Activated CD4-positive, alpha-beta memory T cell treated with anti-CD3 and anti-CD28 coated beads for 36 hours (primary cell): ENCODE measurements at regions of chr4 and their contacts with region 1.

Region 1: GRCh38 chr4:89904524-89904923 is 9.9 kb downstream of the MMRN1 start:
- DNase-seq: no peak
- H3K4me3 Mint-ChIP-seq: no peak overlapping the region
- H3K27ac Mint-ChIP-seq: no peak overlapping the region
- H3K4me1 Mint-ChIP-seq: peaks cover 2% of the 10 kb centered on the region
- H3K27me3 Mint-ChIP-seq: no peaks in the 10 kb centered on the region

Region 2: DNA sequence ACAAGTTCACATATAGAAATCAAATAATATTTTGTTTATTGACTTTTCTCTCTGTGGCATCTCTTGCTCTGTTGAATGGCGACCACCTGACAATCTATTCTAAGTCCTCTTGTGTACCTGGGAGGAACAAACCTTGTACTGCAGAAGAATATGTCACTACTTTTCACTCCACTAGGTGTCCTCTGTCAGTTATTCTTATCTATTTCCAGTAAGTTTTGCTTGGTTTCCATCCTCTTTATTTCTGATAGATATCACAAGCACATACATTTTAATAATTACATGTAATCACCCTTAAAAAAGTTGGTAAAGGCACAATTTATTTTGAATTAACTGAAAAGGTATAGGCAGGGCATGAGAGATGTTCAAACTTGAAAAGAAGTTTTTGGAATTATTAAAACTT is 305.9 kb before region 1 on chr4:
- CTCF ChIA-PET with region 1: no interaction called
- POLR2A ChIA-PET with region 1: no interaction called
- intact Hi-C with region 1: loop called (anchors 2 kb)
- DNase-seq: no peak
- H3K4me3 Mint-ChIP-seq: no peak overlapping the region
- H3K27ac Mint-ChIP-seq: no peak overlapping the region
- H3K4me1 Mint-ChIP-seq: no peaks in the 10 kb centered on the region
- H3K27me3 Mint-ChIP-seq: peaks cover 5% of the 10 kb centered on the region

Region 3: DNA sequence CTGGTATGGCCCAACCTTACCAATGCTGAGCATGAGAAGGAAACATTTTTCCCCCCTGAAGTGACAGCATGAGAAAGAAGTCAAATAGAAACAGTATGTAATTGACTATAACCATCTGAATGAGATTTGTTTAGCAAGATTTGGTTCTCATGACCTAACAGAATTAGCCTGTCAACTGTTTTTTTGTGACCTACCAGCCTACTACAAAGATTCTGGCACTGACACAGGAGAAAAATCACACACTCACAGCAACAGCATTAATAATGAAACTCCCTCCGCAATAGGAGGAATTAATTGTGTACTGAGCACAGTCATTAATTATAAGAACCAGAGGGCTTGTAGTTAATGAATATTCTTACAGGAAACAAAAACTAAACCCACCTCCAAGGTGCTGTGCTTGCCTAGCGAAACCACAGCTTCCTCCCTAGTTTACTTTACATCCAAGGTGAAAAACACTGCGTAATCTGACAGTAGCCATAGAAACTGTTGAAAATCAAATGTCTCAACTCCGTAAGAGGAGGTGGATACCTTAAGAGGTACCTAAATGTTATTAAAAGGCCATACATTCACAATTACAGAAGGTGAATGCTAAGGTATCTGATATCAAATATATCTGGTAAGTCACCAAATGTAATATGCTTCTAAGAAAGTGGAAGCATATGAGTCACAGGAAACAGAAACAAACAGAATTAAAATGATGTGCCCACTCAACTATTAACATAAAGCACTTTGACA is 25.1 kb after region 1 on chr4:
- CTCF ChIA-PET with region 1: no interaction called
- POLR2A ChIA-PET with region 1: no interaction called
- intact Hi-C with region 1: no loop called
- DNase-seq: peak; percentile 10
- H3K4me3 Mint-ChIP-seq: peak overlapping the region; percentile 20
- H3K27ac Mint-ChIP-seq: peak overlapping the region; percentile 2
- H3K4me1 Mint-ChIP-seq: peaks cover 16% of the 10 kb centered on the region
- H3K27me3 Mint-ChIP-seq: no peaks in the 10 kb centered on the region

Region 4: DNA sequence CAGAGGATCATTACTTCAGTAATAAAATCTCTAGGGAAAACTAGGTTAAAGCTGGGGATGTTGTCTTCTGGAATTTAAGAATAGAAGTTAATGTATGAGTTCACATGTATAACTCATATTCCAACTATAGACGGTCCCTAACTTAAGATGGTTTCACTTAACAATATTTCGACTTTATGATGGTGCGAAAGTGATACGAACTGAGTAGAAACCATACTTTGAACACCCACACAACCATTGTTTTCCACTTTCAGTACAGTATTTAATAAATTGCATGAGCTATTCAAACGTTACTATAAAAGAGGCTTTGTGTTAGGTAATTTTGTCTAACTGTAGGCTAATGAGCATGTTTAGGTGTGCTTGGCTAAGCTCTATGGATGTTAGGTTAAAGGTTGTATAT is 261.4 kb after region 1 on chr4:
- CTCF ChIA-PET with region 1: no interaction called
- POLR2A ChIA-PET with region 1: no interaction called
- intact Hi-C with region 1: no loop called
- DNase-seq: no peak
- H3K4me3 Mint-ChIP-seq: no peak overlapping the region
- H3K27ac Mint-ChIP-seq: no peak overlapping the region
- H3K4me1 Mint-ChIP-seq: peaks cover 3% of the 10 kb centered on the region
- H3K27me3 Mint-ChIP-seq: peaks cover 4% of the 10 kb centered on the region